ENCODE measurements at regions of chr7 and their contacts with region 1.

Region 1: GRCh38 chr7:150631866-150632864 is at the start of gene GIMAP6:
- DNase-seq: peak; percentile 18 to 43
- ATAC-seq: peak in 6 of 8 donors; percentile 14 to 63 (median 38)
- H3K4me3 ChIP-seq: peak within 1 kb of the TSS; percentile 19 to 64 (median 53)
- H3K27ac ChIP-seq: peak within 1 kb of the TSS; percentile 85 to 98 (median 94)
- H3K4me1 ChIP-seq: peaks cover 17 to 66% (median 37%) of the 10 kb centered on the region in 9 donors
- H3K27me3 ChIP-seq: no peaks in the 10 kb centered on the region
- CTCF ChIP-seq: no peak
- total RNA-seq, gene GIMAP6: 13.7 to 42.9 (median 25.5) TPM

Region 2: DNA sequence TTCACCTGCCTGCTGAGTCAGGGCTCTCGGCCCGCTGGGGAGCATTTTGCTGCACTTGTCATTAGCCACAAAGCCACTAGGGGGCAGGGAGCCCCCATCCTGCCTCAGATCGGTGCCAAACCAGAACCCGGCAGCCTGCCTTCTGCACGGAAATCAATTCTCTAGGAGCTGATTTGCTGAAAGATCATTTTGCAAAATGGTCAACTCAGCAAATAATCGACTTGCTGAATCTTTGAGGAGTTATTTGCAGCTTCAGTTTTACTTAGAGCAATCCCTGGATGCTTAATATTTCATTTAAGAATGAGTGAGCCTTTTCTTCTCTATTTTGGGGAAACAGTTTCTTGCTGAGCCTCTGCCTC is 183.4 kb before region 1 on chr7:
- intact Hi-C with region 1: loop called in 6 of 10 experiments (anchors 2 to 5 kb)
- DNase-seq: peak; percentile 76 to 84
- ATAC-seq: peak in 7 of 8 donors; percentile 42 to 64 (median 59)
- H3K4me3 ChIP-seq: peak overlapping the region in 4 of 10 donors; percentile 3 to 67 (median 36)
- H3K27ac ChIP-seq: peak overlapping the region in 9 of 10 donors; percentile 73 to 95 (median 90)
- H3K4me1 ChIP-seq: peaks cover 0 to 54% (median 32%) of the 10 kb centered on the region in 9 donors
- H3K27me3 ChIP-seq: no peaks in the 10 kb centered on the region
- CTCF ChIP-seq: peak; percentile 83 to 95 (median 91)

Region 3: DNA sequence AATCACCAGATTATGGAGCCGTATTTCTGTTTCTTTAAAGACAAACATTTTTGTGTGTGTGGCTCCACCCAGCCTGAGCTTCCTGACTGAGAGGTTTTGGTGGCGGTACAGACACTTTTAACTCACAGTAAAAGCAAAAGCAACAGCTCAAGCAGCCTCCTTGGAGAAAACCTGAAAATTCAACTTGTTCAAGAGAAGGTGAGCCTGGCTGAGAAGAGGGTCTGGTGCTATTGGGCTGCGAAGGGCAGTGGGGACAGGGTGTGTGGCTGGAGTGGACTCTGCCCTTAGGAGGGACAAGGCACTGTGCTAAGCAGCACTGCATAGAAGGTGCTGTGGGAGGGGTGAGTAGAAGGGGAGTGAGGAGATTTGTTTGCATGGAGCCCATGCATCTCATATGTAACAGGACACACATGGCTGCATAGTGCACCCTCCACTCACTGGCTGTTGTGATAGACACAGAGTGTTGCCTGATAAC is 117.4 kb before region 1 on chr7 and contains the start of gene GIMAP7:
- intact Hi-C with region 1: loop called in 3 of 10 experiments (anchors 2 to 5 kb)
- DNase-seq: peak in 1 of 2 donors; percentile 38
- ATAC-seq: peak; percentile 54 to 83 (median 80)
- H3K4me3 ChIP-seq: peak within 1 kb of the TSS; percentile 32 to 68 (median 56)
- H3K27ac ChIP-seq: peak within 1 kb of the TSS; percentile 60 to 95 (median 80)
- H3K4me1 ChIP-seq: peaks cover 0 to 25% (median 3%) of the 10 kb centered on the region in 9 donors
- H3K27me3 ChIP-seq: no peaks in the 10 kb centered on the region
- CTCF ChIP-seq: no peak
- total RNA-seq, gene GIMAP7: 7.5 to 41.2 (median 19.6) TPM

Region 4: DNA sequence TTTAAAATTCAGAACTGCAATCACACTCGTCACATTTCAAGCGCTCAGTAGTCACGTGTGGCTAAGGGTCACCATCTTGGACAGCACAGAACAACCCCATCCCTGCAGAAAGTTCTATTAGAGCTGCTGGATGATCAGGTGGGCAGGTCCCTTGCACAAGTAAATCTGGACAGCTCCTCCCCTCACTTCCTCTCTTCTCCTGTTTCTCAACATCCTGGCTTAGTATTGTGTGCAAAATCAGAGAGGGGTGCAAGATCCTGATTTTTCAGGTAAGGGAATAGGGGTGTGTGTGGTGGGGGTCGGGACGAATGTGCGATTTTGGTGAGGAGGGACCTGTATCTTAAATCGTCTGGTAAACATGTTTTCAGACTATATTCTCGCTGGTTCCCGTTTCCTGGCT is 65.0 kb before region 1 on chr7 and contains the start of gene GIMAP4:
- intact Hi-C with region 1: no loop called
- DNase-seq: peak in 1 of 2 donors; percentile 51
- ATAC-seq: peak; percentile 64 to 90 (median 82)
- H3K4me3 ChIP-seq: peak within 1 kb of the TSS; percentile 37 to 72 (median 60)
- H3K27ac ChIP-seq: peak within 1 kb of the TSS; percentile 55 to 97 (median 89)
- H3K4me1 ChIP-seq: peaks cover 0 to 33% (median 11%) of the 10 kb centered on the region in 9 donors
- H3K27me3 ChIP-seq: no peaks in the 10 kb centered on the region
- CTCF ChIP-seq: no peak
- total RNA-seq, gene GIMAP4: 19.7 to 68.6 (median 31.0) TPM

Region 5: GRCh38 chr7:150586785-150587152 is 45.4 kb before region 1 on chr7:
- intact Hi-C with region 1: loop called in 3 of 10 experiments (anchors 5 kb)
- DNase-seq: peak in 1 of 2 donors; percentile 49
- ATAC-seq: peak; percentile 89 to 97 (median 93)
- H3K4me3 ChIP-seq: peak overlapping the region in 2 of 10 donors; percentile 14 to 25
- H3K27ac ChIP-seq: peak overlapping the region; percentile 59 to 95 (median 78)
- H3K4me1 ChIP-seq: peaks cover 0 to 41% (median 29%) of the 10 kb centered on the region in 9 donors
- H3K27me3 ChIP-seq: no peaks in the 10 kb centered on the region
- CTCF ChIP-seq: no peak

Region 6: GRCh38 chr7:150716368-150716767 is 84.2 kb after region 1 on chr7 and contains the start of gene GIMAP1:
- intact Hi-C with region 1: loop called in 4 of 10 experiments (anchors 2 to 5 kb)
- DNase-seq: peak; percentile 36 to 78
- ATAC-seq: peak; percentile 79 to 95 (median 91)
- H3K4me3 ChIP-seq: peak within 1 kb of the TSS; percentile 30 to 71 (median 60)
- H3K27ac ChIP-seq: peak within 1 kb of the TSS; percentile 81 to 94 (median 88)
- H3K4me1 ChIP-seq: peaks cover 0 to 51% (median 8%) of the 10 kb centered on the region in 9 donors
- H3K27me3 ChIP-seq: no peaks in the 10 kb centered on the region
- CTCF ChIP-seq: no peak
- total RNA-seq, gene GIMAP1: 2.4 to 11.2 (median 4.3) TPM

Region 7: GRCh38 chr7:150753826-150754603 is 121.8 kb after region 1 on chr7:
- intact Hi-C with region 1: loop called in 5 of 10 experiments (anchors 2 to 10 kb)
- DNase-seq: peak in 1 of 2 donors; percentile 43
- ATAC-seq: peak; percentile 36 to 67 (median 54)
- H3K4me3 ChIP-seq: no peak overlapping the region
- H3K27ac ChIP-seq: peak overlapping the region in 9 of 10 donors; percentile 25 to 87 (median 83)
- H3K4me1 ChIP-seq: peaks cover 20 to 68% (median 51%) of the 10 kb centered on the region in 9 donors
- H3K27me3 ChIP-seq: no peaks in the 10 kb centered on the region
- CTCF ChIP-seq: peak in 7 of 9 donors; percentile 8 to 62 (median 50)

Region 8: GRCh38 chr7:150992833-150993302 is 360.7 kb after region 1 on chr7:
- intact Hi-C with region 1: no loop called
- DNase-seq: peak in 1 of 2 donors; percentile 75
- ATAC-seq: peak; percentile 54 to 72 (median 60)
- H3K4me3 ChIP-seq: peak overlapping the region in 5 of 10 donors; percentile 62 to 66 (median 64)
- H3K27ac ChIP-seq: peak overlapping the region; percentile 65 to 93 (median 86)
- H3K4me1 ChIP-seq: peaks cover 8 to 77% (median 41%) of the 10 kb centered on the region in 9 donors
- H3K27me3 ChIP-seq: no peaks in the 10 kb centered on the region
- CTCF ChIP-seq: no peak

Measured in heart right ventricle (tissue), 16 donors.